Activated B cell treated with CpG ODN at 0.5 μM for 24 hours (primary cell): ENCODE measurements at regions of chr18 and their contacts with region 1.

Region 1: DNA sequence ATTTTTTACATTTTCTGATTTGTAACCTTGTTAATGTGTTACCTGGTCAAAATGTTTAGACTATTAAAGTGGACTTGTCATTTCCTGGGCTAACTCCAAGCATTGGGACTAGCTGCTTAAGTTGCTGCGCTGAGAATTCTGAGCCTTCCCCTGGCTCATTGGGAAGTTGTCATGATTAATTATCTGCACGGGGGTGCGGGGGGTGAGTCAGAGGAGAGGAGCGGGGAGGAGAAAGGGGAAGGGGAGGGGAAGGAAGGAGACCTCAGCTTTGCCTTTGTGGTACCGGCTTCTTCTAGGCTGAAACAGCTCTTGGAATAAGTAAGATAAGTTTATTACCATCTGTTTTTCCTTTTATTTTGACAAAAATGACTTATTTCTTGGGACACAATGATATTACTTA is 52.9 kb upstream of the APCDD1 start:
- DNase-seq: no peak
- ATAC-seq: no peak
- H3K4me3 Mint-ChIP-seq: no peak overlapping the region
- H3K27ac Mint-ChIP-seq: no peak overlapping the region
- H3K4me1 Mint-ChIP-seq: peaks cover 14% of the 10 kb centered on the region
- H3K27me3 Mint-ChIP-seq: peaks cover 4% of the 10 kb centered on the region
- CTCF ChIP-seq: no peak

Region 2: DNA sequence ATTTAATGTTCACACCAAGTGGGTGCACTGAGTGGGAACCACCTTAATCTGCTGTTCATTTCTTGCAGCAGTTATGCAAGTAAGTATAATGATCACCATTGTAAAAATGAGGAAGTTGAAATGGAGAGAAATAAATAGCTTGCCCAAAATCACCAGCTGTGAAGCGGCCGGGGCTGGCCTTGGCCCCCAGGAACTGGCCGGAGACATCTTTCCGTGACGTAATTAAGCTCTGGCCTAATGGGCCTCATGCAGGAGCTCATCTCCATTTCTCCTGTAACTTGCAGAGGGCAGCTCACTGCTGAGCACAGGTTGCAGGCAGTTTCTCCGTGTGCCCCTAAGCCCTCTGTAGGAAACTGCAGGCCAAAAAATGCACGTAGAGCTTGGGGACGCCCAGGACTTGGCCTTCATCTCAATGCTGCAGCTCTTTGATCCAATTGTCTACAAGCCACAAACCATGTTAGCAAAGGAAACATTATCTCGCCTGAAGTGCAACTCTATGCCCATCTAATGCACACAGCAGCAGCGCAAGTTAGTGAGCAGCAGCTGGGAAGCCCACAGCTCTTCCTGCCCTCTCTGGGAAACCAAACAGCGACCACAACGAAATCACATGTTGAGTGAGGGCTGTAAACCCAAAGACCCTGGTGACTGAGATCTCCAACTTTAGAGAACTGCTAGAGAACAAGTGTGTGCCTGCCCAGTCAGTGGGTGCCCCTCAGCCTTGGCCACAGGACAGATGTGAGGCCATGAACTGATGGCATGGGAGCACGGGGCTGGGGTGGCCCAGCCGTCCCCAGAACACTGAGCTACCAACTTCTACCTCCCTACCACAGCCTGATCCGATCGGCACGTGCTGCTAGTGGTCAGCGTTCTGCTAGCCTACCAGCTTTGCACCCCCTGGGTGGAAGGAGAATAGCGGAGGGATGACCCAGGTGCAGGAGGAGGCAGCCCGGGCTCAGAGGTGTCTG is 81.7 kb after region 1 on chr18:
- CTCF ChIA-PET with region 1: no interaction called
- POLR2A ChIA-PET with region 1: no interaction called
- intact Hi-C with region 1: loop called (anchors 10 kb)
- DNase-seq: peak; percentile 37
- ATAC-seq: peak; percentile 79
- H3K4me3 Mint-ChIP-seq: peak overlapping the region; percentile 62
- H3K27ac Mint-ChIP-seq: peak overlapping the region; percentile 82
- H3K4me1 Mint-ChIP-seq: peaks cover 68% of the 10 kb centered on the region
- H3K27me3 Mint-ChIP-seq: no peaks in the 10 kb centered on the region
- CTCF ChIP-seq: no peak

Region 3: DNA sequence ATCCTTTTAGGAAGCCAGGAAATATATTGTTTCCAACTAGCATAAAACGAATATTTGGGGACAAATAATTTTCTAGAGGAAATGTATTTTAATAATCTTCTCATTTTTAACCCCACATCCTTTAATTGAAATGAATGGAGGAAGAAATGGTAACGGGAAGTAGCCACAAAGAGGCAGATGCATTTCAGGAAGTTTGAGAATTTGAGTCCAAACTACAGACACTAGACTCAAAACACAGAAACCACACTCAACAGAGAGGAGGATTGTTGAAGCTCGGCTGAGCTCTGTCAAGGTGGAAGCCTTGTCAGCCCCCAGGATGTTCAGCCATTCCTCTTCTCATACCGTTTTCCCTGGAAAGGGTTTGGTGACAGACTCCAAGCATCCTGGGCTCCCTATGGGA is 412.8 kb after region 1 on chr18:
- CTCF ChIA-PET with region 1: no interaction called
- POLR2A ChIA-PET with region 1: no interaction called
- intact Hi-C with region 1: no loop called
- DNase-seq: no peak
- ATAC-seq: no peak
- H3K4me3 Mint-ChIP-seq: no peak overlapping the region
- H3K27ac Mint-ChIP-seq: no peak overlapping the region
- H3K4me1 Mint-ChIP-seq: no peaks in the 10 kb centered on the region
- H3K27me3 Mint-ChIP-seq: peaks cover 3% of the 10 kb centered on the region
- CTCF ChIP-seq: no peak